ENCODE measurements at regions of chr18 and their contacts with region 1.

Region 1: GRCh38 chr18:44130376-44130942 is 550.2 kb upstream of the SETBP1 start:
- DNase-seq: no peak
- H3K4me3 ChIP-seq: no peak overlapping the region
- H3K27ac ChIP-seq: no peak overlapping the region
- H3K4me1 ChIP-seq: no peaks in the 10 kb centered on the region
- H3K27me3 ChIP-seq: no peaks in the 10 kb centered on the region
- CTCF ChIP-seq: peak; percentile 28 to 66 (median 46)

Region 2: DNA sequence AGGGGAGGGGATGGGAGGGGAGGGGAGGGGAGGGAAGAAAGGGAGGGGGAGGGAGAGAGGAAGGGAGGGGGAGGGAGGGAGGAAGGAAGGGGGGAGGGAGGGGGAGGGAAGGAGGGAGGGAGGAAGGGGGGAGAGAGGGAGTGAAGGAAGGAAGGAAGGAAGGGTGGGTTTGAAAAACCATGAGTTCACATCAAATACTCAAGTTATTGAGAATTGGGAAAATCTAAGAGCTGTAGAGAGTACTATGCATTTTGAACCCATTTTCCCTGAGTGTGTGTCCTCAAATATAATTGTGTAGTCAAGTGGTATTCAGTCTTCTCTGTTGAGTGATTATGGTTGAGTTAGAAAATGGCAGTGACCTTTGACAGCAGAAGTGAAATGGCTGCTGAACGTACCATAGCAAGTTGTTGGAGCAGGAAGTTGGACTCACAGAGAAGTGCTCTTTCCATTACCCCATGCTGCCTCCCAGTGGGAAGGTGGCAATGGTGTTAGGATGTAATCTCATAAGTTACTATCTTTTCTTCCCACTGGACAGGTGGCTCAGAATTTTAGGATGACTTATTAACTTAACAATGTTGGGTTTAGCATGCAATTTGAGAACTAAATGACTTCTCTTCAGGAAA is 764.8 kb after region 1 on chr18:
- intact Hi-C with region 1: loop called (anchors 10 kb)
- DNase-seq: no peak
- H3K4me3 ChIP-seq: no peak overlapping the region
- H3K27ac ChIP-seq: no peak overlapping the region
- H3K4me1 ChIP-seq: peaks cover 0 to 2% of the 10 kb centered on the region in 2 donors
- H3K27me3 ChIP-seq: no peaks in the 10 kb centered on the region
- CTCF ChIP-seq: peak in 1 of 3 experiments; percentile 17

Region 3: DNA sequence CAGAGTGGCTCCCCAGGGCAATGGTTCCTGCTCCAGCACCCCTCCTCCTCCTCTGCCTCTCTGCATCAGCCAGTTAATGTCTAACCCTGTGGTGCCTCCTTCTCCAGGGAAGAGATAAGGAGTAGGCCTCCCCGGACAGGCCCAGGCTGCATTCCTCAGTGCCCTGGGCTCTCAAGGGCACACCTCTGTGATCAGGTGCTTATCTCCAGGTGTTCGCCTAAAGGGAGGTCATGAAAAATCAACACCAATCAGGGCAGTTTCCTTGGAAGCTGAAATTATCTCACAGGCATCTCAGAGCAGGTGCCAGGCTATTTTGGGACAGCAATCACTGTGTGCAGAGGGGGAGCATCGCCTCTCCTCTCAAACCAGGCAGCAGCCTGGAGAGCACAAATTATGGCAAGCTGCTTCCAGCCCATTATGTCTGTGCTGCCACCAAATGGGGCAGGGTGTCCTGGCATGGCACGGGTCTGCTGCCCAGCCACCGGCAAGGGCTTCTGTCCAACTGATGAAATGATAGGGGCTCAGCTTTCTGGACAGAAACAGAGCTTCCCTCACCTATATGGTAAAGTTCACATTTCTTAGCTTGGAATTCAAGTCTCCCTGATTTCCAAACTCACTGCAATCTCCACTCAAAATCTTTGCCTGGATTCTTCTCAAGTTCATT is 1229.0 kb after region 1 on chr18:
- intact Hi-C with region 1: loop called (anchors 10 kb)
- DNase-seq: no peak
- H3K4me3 ChIP-seq: no peak overlapping the region
- H3K27ac ChIP-seq: no peak overlapping the region
- H3K4me1 ChIP-seq: peaks cover 0 to 3% of the 10 kb centered on the region in 2 donors
- H3K27me3 ChIP-seq: no peaks in the 10 kb centered on the region
- CTCF ChIP-seq: no peak

Region 4: DNA sequence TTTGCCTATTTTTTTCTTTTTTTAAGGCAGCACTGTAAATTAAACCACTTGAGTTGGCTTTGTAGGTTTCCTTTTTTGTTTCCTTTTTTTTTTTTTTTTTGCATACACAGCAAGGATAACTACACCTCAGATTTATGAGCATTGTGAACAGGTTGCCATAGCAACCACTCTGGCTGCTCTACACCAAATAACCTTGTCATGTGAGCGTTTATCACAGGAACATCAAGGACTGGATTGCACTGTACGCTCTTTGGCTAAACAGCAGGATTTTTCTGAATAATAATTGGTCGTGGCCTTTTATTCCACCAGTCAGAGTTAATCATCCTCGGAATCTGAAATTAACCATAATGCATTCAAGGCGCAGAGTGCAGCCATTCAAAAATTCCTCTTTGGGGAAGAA is 1285.7 kb after region 1 on chr18:
- intact Hi-C with region 1: no loop called
- DNase-seq: no peak
- H3K4me3 ChIP-seq: no peak overlapping the region
- H3K27ac ChIP-seq: no peak overlapping the region
- H3K4me1 ChIP-seq: no peaks in the 10 kb centered on the region
- H3K27me3 ChIP-seq: no peaks in the 10 kb centered on the region
- CTCF ChIP-seq: no peak